ENCODE measurements at regions of chr3 and their contacts with region 1.

Region 1: DNA sequence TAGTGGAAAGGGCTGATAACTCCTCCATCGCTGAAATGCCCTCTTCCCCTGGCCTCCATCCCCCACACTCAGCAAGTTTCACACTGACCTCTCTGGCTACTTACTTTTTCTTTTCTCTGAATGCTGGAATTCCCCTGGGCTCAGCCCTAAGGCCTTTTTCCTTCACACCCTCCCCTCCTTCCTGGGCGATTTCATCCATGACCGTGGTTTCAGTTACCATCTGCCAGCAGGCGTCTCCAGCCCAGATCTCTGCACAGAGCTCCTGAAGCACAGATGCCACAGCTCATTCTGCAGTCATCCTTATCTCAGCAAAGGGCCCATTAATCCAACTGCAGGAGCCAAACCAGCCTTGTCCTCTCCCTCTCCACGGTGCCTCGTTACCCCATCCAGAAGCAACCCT is 114.0 kb downstream of the RFTN1 start:
- DNase-seq: peak; percentile 38
- ATAC-seq: peak; percentile 79 to 87

Region 2: GRCh38 chr3:16329036-16329825 is 70.2 kb before region 1 on chr3:
- intact Hi-C with region 1: no loop called
- DNase-seq: no peak
- ATAC-seq: no peak

Region 3: GRCh38 chr3:16511681-16512434 is 112.4 kb after region 1 on chr3:
- intact Hi-C with region 1: loop called in 1 of 2 experiments (anchors 10 kb)
- DNase-seq: peak; percentile 78
- ATAC-seq: peak; percentile 49 to 62